A549 (cell line): ENCODE measurements at regions of chr17 and their contacts with region 1.

Region 1: DNA sequence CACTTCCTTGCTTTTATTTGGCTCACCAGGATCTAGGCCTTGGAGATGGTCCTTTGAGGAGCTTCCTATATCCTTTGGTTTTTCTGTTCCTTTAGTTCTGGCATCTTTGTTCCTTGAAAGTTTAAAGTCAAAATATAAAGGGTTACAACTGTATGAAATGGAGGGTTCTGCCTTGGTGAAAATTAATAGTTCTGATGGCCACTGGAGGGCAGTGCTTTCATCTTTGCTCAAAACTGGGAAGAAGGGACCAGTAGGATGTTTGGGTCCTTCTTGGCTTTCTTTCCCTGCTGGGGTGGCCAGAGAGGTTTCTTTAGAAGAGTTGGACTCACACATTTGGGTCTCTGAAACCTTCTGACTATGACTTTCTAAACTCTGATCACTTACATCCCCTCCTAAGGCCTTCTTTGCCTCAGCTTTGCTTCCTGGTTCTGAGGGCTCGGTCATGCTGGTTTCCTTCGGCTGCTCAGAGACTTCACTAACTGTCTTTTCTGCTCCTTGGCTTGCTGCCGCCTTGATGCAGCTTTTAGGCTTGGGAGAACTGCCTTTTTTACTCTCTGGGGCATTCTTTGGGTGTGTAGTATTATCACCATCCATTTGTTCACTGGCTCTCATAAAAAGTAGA is 10.9 kb upstream of the ITGA2B start:
- DNase-seq: peak; percentile 48
- ATAC-seq: peak; percentile 78 to 84; a peak in 5 of 6 replicates
- H3K4me3 ChIP-seq: no peak overlapping the region
- H3K27ac ChIP-seq: no peak overlapping the region
- H3K4me1 ChIP-seq: no peaks in the 10 kb centered on the region
- CTCF ChIP-seq: peak; percentile 75
- EP300 ChIP-seq: no peak
- POLR2A ChIP-seq: no peak
- RAD21 ChIP-seq: peak; percentile 59 to 63

Region 2: DNA sequence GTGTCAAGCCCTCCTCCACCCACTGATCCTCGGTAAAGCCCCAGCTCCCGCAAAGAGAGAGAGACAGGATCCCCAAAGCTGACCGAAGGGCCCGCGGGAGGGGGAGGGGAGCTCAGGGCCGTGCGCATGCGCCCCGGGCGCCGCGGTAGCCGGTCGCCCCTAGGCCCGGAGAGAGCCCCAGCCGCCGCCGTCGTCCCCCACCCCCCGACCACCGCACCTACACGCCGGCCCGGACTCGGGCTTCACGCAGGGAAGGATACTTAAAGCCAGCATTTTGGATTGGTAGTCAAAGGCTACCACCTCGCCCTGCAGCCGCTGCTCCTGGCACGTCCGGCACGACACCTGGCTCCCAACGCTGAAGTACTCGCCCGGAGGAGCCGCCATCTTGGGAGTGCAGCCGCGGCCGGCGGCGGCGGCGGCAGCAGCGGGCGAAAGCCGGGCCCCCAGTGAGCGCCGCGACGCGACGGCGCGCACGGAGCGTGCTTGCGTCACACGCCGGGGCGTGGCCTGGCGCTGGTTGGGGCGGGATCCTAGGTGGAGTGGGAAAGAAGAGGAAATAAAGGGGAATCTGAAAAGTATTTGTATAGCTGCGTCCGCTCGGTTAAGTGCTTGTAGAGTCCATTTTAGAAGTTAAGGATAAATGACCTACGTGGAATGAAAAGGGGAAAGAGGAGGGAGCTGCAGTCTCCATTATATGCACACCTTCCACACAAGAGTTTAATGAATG is 334.0 kb before region 1 on chr17 and contains the start of gene LSM12:
- CTCF ChIA-PET with region 1: no interaction called
- POLR2A ChIA-PET with region 1: no interaction called
- DNase-seq: peak; percentile 95 to 96
- ATAC-seq: peak; percentile 68
- H3K4me3 ChIP-seq: peak within 1 kb of the TSS; percentile 88
- H3K27ac ChIP-seq: peak within 1 kb of the TSS; percentile 88 to 96
- H3K4me1 ChIP-seq: peaks cover 29% of the 10 kb centered on the region
- CTCF ChIP-seq: no peak
- EP300 ChIP-seq: no peak
- POLR2A ChIP-seq: peak; percentile 79
- RAD21 ChIP-seq: no peak
- polyA plus RNA-seq, gene LSM12: 64.9 and 75.0 TPM in 2 replicates

Region 3: DNA sequence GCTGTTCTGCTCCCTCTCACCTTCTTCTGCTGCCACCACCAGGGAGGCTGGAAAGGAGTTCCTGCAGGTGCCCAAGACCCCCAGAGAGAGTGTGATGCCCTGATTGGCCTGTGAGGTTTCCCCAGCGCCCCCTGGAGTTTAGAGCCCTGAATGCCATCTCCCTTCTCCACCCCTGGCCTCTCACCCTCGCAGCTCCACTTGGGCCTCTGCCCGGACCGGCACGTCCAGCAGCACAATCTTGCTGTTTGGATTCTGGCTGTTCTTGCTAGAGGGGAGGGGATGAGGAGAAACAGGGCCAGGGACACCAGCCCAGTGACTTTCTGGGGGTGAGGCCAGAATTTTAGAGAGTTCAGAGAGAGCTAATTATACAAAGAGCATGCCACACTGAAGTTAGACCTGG is 24.2 kb before region 1 on chr17:
- CTCF ChIA-PET with region 1: interaction called, 11 read pairs
- POLR2A ChIA-PET with region 1: no interaction called
- DNase-seq: peak in 1 of 2 experiments; percentile 80
- ATAC-seq: peak; percentile 36 to 82; a peak in 4 of 6 replicates
- H3K4me3 ChIP-seq: no peak overlapping the region
- H3K27ac ChIP-seq: no peak overlapping the region
- H3K4me1 ChIP-seq: no peaks in the 10 kb centered on the region
- CTCF ChIP-seq: peak; percentile 38; the same call in 2 of the 3 replicates
- EP300 ChIP-seq: no peak
- POLR2A ChIP-seq: no peak
- RAD21 ChIP-seq: no peak

Region 4: DNA sequence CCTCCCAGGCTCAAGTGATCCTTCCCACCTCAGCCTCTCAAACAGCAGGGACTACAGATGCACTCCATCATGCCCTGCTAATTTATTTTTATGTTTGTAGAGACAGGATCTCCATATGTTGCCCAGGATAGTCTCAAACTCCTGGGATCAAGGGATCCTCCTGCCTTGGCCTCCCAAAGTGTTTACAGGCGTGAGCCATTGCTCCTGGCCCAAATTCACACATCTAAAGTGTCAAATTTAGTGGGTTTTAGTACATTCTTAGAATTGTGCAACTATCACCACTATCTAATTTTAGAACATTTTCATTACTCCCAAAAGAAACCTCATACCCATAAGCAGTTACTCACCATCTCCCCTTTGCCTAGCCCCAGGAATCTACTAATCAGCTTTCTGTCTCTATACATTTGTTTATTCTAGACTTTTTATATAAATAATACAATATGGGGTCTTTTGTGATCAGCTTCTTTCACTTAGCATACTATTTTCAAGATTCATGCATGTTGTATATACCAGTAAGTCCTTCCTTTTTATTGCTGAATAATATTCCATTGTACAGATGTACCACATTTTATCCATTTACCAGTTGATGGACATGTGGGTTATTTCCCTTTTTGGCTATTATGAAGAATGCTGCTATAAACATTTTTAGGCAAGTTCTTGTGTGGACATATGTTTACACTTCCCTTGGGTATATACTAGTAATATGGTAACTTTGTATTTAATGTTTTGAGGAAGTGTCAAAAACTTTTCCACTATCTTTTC is 14.2 kb after region 1 on chr17:
- CTCF ChIA-PET with region 1: interaction called, 37 read pairs
- POLR2A ChIA-PET with region 1: no interaction called
- DNase-seq: no peak
- ATAC-seq: no peak
- H3K4me3 ChIP-seq: no peak overlapping the region
- H3K27ac ChIP-seq: no peak overlapping the region
- H3K4me1 ChIP-seq: peaks cover 12% of the 10 kb centered on the region
- CTCF ChIP-seq: no peak
- EP300 ChIP-seq: no peak
- POLR2A ChIP-seq: no peak
- RAD21 ChIP-seq: no peak

Region 5: GRCh38 chr17:44522883-44523671 is 122.7 kb after region 1 on chr17:
- CTCF ChIA-PET with region 1: interaction called, 57 read pairs
- POLR2A ChIA-PET with region 1: no interaction called
- DNase-seq: peak; percentile 84
- ATAC-seq: peak; percentile 97 to 99
- H3K4me3 ChIP-seq: no peak overlapping the region
- H3K27ac ChIP-seq: peak overlapping the region in 1 of 2 experiments; percentile 10; a peak in 1 of 6 replicates
- H3K4me1 ChIP-seq: peaks cover 2% of the 10 kb centered on the region; the same call in 1 of the 3 replicates
- CTCF ChIP-seq: peak; percentile 73
- EP300 ChIP-seq: no peak
- POLR2A ChIP-seq: no peak
- RAD21 ChIP-seq: peak; percentile 81 to 91